IMR-90 (cell line): ENCODE measurements at regions of chr5 and their contacts with region 1.

Region 1: GRCh38 chr5:110899566-110900412 is 161.0 kb downstream of the SLC25A46 start:
- DNase-seq: peak; percentile 72
- ATAC-seq: peak; percentile 67
- H3K4me3 ChIP-seq: no peak overlapping the region; the same call in 1 of the 2 replicates
- H3K27ac ChIP-seq: peak overlapping the region; percentile 97
- H3K4me1 ChIP-seq: peaks cover 9% of the 10 kb centered on the region; the same call in 1 of the 2 replicates
- H3K27me3 ChIP-seq: no peaks in the 10 kb centered on the region
- CTCF ChIP-seq: no peak
- POLR2A ChIP-seq: no peak
- RAD21 ChIP-seq: no peak

Region 2: DNA sequence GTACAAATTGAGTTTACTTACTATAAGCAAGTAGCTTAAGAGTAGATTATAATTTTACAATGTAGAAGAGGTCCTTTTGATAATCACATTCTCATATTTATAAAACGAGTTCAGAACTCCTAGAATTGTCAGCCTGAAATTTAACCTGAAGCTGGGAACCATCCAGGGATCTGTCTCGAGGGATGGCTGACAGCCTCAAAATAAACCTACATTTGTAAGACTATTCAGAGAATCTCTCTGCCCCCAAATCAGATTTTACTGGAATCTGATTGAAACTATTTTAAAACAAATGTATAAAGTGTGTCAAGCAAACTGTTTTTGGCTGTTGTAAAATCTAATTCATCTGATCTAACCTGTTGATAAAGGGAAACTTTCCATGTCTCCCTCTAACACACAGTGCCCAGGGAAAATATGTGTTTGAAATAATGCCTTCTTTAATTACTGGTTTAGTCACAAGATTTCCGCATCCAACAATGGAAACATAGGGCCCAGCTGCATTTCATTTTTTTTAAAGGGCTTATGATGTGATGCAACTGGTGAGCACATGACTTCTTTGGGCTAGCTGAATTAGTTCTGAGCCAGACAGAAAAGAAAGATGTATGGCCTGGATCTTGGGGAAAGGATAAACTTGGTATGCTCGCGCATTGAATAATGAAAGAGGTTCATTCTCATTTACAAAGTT is 130.6 kb before region 1 on chr5:
- CTCF ChIA-PET with region 1: no interaction called
- POLR2A ChIA-PET with region 1: no interaction called
- dilution Hi-C with region 1: no loop called
- in situ Hi-C with region 1: no loop called
- intact Hi-C with region 1: loop called (anchors 5 kb)
- DNase-seq: peak; percentile 83
- ATAC-seq: peak; percentile 62
- H3K4me3 ChIP-seq: no peak overlapping the region
- H3K27ac ChIP-seq: peak overlapping the region; percentile 69; the same call in 1 of the 2 replicates
- H3K4me1 ChIP-seq: 0 out of 2 replicates have a peak, but pooled peaks cover 2% of the 10 kb centered on the region
- H3K27me3 ChIP-seq: no peaks in the 10 kb centered on the region
- CTCF ChIP-seq: no peak
- POLR2A ChIP-seq: no peak
- RAD21 ChIP-seq: no peak

Region 3: GRCh38 chr5:110790673-110791072 is 109.1 kb before region 1 on chr5:
- CTCF ChIA-PET with region 1: no interaction called
- POLR2A ChIA-PET with region 1: no interaction called
- dilution Hi-C with region 1: no loop called
- in situ Hi-C with region 1: no loop called
- intact Hi-C with region 1: no loop called
- DNase-seq: peak; percentile 82
- ATAC-seq: peak; percentile 88
- H3K4me3 ChIP-seq: no peak overlapping the region
- H3K27ac ChIP-seq: no peak overlapping the region
- H3K4me1 ChIP-seq: no peaks in the 10 kb centered on the region
- H3K27me3 ChIP-seq: no peaks in the 10 kb centered on the region
- CTCF ChIP-seq: peak; percentile 63
- POLR2A ChIP-seq: no peak
- RAD21 ChIP-seq: peak; percentile 59

Region 4: DNA sequence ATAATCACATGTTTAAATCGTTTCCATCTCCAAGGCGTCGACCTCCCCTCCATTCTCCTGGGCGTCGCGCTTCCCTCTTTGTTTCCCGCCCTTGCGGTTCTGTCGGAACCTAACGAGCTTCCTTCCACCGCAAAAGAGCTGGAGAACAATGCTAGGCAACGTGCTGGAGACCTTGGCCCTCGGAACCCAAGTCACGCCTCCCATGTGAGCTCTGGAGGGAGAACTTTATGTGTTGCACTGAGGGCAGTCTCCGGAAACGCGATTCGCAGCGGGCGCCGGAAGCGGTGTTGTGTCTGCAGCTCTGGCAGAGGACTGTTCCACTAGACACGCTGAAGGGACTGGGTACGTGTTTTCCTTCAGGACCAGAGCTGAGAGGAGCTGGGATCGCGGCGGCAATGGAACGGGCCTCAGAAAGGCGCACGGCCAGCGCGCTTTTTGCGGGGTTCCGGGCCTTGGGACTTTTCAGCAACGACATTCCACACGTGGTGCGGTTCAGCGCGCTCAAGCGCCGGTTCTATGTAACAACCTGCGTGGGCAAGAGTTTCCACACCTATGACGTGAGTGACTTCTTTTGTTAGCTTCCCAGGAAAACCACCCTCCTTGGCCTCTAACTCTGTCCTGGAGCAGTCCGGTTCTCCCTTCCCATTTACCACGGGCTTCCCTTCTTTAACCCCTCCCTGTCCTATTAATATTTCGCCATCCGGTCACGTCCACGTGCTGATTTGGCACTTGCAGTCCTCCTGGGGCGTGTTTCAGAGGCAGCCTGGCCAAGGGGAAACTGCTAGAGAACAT is 192.5 kb after region 1 on chr5 and contains the start of gene WDR36:
- CTCF ChIA-PET with region 1: no interaction called
- POLR2A ChIA-PET with region 1: no interaction called
- dilution Hi-C with region 1: no loop called
- in situ Hi-C with region 1: no loop called
- intact Hi-C with region 1: loop called (anchors 5 kb)
- DNase-seq: peak; percentile 92
- ATAC-seq: peak; percentile 98
- H3K4me3 ChIP-seq: peak within 1 kb of the TSS; percentile 87
- H3K27ac ChIP-seq: peak within 1 kb of the TSS; percentile 87
- H3K4me1 ChIP-seq: peaks cover 4% of the 10 kb centered on the region; the same call in 1 of the 2 replicates
- H3K27me3 ChIP-seq: no peaks in the 10 kb centered on the region
- CTCF ChIP-seq: no peak
- POLR2A ChIP-seq: peak; percentile 68; the same call in 1 of the 2 replicates
- RAD21 ChIP-seq: 0 out of 2 replicates have a peak, but pooled peaks have one; percentile 16
- total RNA-seq, gene WDR36: 87.8 and 111 TPM in 2 replicates